Activated T-helper 1 cell treated with anti-CD3 and anti-CD28 coated beads, Interleukin-12 subunit alpha, Interleukin-12 subunit beta, Interleukin-2, Interleukin-4 antibody, amounts not matched to agents 30 ng/mL and 10 ng/mL and 1 ng/mL, durations not matched to agents 14 hours and 24 hours and 36 hours (primary cell): ENCODE measurements at regions of chr4 and their contacts with region 1.

Region 1: DNA sequence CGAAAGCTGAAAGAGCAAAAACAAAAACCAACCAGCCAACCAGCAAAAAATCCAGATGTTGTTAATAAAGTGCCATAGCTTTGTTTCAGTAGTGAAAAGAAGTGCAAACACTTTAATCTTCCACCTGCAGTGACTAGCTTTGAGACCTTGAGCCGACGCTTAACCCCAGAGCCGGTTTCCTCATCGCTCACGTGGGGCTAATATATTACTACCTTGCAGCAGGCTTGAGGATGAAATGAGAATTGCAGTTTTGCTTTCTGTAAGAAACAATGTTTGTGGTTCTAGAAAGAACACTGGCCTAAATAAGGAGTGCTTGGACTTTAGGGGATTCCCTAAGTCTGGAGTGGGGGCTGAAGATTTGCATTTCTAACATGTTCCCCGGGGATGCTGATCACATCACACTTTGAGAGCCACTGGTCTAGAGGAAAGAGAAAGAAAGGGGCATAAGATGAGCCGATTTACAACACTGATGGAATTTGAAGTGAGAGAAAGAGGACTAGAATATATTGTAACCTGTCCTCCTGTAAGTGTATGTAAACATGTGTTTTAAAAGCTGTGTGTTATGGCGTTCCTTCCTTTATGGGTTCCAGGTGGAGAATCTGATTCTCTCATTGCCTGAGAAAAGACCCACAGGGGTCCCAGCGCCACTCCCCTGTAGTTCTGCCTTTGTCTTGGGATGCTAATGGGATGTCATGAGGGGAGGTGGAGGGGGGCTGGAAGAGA is 1.4 kb downstream of the FGF2 start:
- DNase-seq: peak; percentile 40
- H3K4me3 Mint-ChIP-seq: peak overlapping the region; percentile 78
- H3K27ac Mint-ChIP-seq: peak overlapping the region; percentile 64
- H3K4me1 Mint-ChIP-seq: peaks cover 34% of the 10 kb centered on the region
- H3K27me3 Mint-ChIP-seq: peaks cover 39% of the 10 kb centered on the region

Region 2: DNA sequence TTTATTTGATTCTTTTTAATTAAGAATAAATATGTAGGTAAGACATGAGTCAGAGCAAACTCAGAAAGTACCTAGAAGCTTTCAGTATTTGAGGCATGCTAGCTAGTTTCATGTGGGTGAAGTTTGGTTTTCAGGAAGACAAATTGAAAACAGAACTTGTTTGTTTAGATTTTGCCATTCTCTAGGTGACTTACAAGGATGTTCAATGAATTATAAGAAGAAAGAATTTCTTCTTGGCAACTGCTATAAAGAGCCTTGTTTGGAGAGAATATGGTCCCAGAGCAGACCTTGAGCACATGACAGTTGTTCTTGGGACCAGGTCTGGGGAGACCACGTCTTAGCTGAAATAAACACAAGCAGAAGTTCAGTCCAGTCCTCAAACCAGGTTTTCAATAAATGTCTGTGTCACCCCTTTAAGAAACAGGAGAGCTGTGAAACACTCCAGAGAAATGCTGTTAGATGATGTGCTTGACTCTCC is 169.2 kb before region 1 on chr4:
- intact Hi-C with region 1: loop called (anchors 2 kb)
- DNase-seq: no peak
- H3K4me3 Mint-ChIP-seq: peak overlapping the region; percentile 66
- H3K27ac Mint-ChIP-seq: peak overlapping the region; percentile 94
- H3K4me1 Mint-ChIP-seq: peaks cover 59% of the 10 kb centered on the region
- H3K27me3 Mint-ChIP-seq: no peaks in the 10 kb centered on the region